ENCODE measurements at regions of chr4 and their contacts with region 1.

Region 1: GRCh38 chr4:70863099-70863790 is 23.6 kb upstream of the GRSF1 start:
- DNase-seq: peak; percentile 21
- H3K4me3 Mint-ChIP-seq: peak overlapping the region; percentile 15
- H3K27ac Mint-ChIP-seq: peak overlapping the region; percentile 82
- H3K4me1 Mint-ChIP-seq: peaks cover 15% of the 10 kb centered on the region
- H3K27me3 Mint-ChIP-seq: peaks cover under 1% of the 10 kb centered on the region

Region 2: GRCh38 chr4:70624226-70624793 is 238.9 kb before region 1 on chr4:
- intact Hi-C with region 1: loop called (anchors 2 kb)
- DNase-seq: no peak
- H3K4me3 Mint-ChIP-seq: no peak overlapping the region
- H3K27ac Mint-ChIP-seq: no peak overlapping the region
- H3K4me1 Mint-ChIP-seq: peaks cover 7% of the 10 kb centered on the region
- H3K27me3 Mint-ChIP-seq: no peaks in the 10 kb centered on the region

Region 3: DNA sequence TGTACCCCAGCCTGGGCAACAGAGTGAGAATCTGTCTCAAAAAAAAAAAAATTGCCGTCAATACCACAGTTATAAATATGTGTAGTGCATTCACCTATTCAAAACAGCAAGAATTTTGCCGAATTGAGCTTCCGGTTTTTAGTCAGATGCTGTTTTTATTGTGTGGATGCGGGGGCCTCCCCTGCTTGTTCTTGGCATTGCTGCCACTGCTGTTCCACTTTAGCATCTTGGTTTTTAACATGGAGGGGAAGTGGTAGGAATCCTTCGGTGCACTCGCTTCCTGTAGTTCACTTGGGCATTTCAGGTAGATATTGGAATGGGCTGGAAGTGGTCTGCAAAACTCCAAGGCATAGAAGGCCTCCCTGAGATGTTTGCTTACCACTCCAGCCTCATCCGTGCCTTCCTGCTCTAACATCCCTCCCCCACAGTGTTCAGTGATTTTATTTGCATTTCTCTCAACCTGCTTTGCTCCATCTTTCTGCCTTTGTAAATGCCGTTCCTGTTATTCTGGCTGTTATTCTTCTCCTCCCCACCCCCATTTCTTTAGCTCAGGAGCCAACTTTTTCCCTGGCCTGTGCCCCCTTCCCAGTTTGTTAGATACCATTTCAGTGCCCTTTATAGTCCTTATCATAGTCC is 64.4 kb after region 1 on chr4:
- intact Hi-C with region 1: loop called (anchors 1 kb)
- DNase-seq: peak; percentile 15
- H3K4me3 Mint-ChIP-seq: peak overlapping the region; percentile 11
- H3K27ac Mint-ChIP-seq: peak overlapping the region; percentile 76
- H3K4me1 Mint-ChIP-seq: peaks cover 31% of the 10 kb centered on the region
- H3K27me3 Mint-ChIP-seq: no peaks in the 10 kb centered on the region

Region 4: DNA sequence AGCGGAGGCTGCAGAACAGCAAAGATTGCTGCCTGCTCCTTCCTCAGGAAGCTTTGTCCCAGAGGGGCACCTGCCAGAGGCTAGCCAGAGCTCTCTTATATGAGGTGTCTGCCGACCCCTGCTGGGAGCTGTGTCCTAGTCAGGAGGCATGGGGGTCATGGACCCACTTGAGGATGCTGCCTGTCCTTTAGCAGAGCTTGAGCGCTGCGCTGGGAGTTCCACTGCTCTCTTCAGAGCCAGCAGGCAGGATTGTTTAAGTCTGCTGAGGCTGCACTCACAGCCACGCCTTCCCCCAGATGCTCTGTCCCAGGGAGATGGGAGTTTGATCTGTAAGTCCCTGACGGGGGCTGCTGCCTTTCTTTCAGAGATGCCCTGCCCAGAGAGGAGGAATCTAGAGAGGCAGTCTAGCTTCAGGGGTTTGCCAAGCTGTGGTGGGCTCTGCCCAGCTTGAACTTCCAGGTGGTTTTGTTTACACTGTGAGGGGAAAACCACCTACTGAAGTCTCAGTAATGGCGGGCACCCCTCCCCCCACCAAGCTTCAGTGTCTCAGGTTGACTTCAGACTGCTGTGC is 141.1 kb after region 1 on chr4:
- intact Hi-C with region 1: loop called (anchors 1 kb)
- DNase-seq: peak; percentile 54
- H3K4me3 Mint-ChIP-seq: peak overlapping the region; percentile 76
- H3K27ac Mint-ChIP-seq: peak overlapping the region; percentile 81
- H3K4me1 Mint-ChIP-seq: peaks cover 90% of the 10 kb centered on the region
- H3K27me3 Mint-ChIP-seq: no peaks in the 10 kb centered on the region

Measured in activated T-helper 1 cell treated with anti-CD3 and anti-CD28 coated beads, Interleukin-12 subunit alpha, Interleukin-12 subunit beta, Interleukin-2, Interleukin-4 antibody, amounts not matched to agents 30 ng/mL and 10 ng/mL and 1 ng/mL, durations not matched to agents 14 hours and 24 hours and 36 hours (primary cell).